Naive thymus-derived CD4-positive, alpha-beta T cell (primary cell): ENCODE measurements at regions of chr7 and their contacts with region 1.

Region 1: DNA sequence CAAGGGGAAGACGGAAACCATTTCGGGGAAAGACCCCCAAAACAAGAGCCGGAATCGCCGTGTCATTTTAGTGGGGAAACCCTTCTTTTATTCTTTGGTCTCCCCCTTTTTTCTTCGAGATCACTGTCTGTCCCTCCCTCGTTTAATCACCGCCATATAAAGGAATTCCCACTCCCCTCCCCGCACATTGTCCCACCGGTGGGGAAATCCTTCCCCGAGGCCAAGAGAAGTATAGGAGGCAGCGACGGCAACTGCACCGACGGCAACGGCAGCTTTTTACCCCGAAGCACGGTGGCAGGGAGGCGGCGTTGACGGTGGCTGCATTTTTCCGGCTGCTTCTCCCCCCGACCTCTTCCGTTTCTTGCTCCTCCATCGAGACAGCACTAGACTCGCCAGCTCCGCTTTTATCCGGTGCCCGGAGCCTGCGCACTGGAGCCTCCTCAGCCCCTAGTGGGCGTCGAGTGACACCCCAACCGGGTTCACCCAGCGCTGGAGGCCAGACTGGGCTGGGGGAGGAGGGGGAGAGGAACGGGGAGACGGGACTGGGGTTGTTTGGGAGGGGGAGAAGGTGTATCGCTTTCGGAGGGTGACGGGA is 687 bp upstream of the KMT2E start:
- DNase-seq: peak; percentile 93 to 98 (median 96)
- ATAC-seq: peak; percentile 68
- H3K4me3 ChIP-seq: peak overlapping the region; percentile 99
- H3K4me3 Mint-ChIP-seq: peak overlapping the region; percentile 96 to 100 (median 98)
- H3K27ac ChIP-seq: peak overlapping the region; percentile 97
- H3K27ac Mint-ChIP-seq: peak overlapping the region; percentile 99 to 100 (median 100)
- H3K4me1 ChIP-seq: peaks cover 14 to 24% of the 10 kb centered on the region in 2 donors
- H3K4me1 Mint-ChIP-seq: peaks cover 31 to 50% (median 41%) of the 10 kb centered on the region in 7 donors
- H3K27me3 ChIP-seq: no peaks in the 10 kb centered on the region
- H3K27me3 Mint-ChIP-seq: peaks cover 0 to 8% (median 0%) of the 10 kb centered on the region in 5 donors

Region 2: GRCh38 chr7:104943502-104944343 is 69.6 kb before region 1 on chr7:
- CTCF ChIA-PET with region 1: no interaction called
- POLR2A ChIA-PET with region 1: interaction called, 99 read pairs
- intact Hi-C with region 1: loop called (anchors 1 kb)
- DNase-seq: peak; percentile 31 to 85 (median 68)
- ATAC-seq: peak; percentile 23
- H3K4me3 ChIP-seq: peak overlapping the region; percentile 40
- H3K4me3 Mint-ChIP-seq: peak overlapping the region; percentile 77 to 95 (median 88)
- H3K27ac ChIP-seq: peak overlapping the region; percentile 87
- H3K27ac Mint-ChIP-seq: peak overlapping the region; percentile 95 to 100 (median 100)
- H3K4me1 ChIP-seq: peaks cover 46 to 50% of the 10 kb centered on the region in 2 donors
- H3K4me1 Mint-ChIP-seq: peaks cover 45 to 79% (median 70%) of the 10 kb centered on the region in 7 donors
- H3K27me3 ChIP-seq: no peaks in the 10 kb centered on the region
- H3K27me3 Mint-ChIP-seq: peaks cover 0 to 2% (median 0%) of the 10 kb centered on the region in 5 donors

Region 3: DNA sequence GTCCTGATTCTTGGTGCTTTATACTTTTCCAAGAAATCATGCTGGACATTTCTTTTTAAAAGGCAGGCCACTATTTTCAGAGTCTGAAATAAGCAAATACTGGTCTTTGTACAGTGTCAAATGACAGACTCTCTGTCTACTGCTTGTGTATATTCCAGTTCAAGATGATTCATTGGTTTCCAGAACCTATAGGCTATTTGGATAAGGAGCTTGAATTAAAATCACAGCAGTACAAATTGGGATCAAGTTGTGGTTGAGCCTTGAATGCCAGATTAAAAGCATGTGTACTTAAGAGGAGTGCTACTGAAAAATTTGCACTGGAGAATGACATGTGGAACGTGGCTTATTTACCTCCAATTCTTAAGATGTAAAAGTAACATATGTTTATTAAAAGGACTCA is 11.4 kb after region 1 on chr7:
- CTCF ChIA-PET with region 1: interaction called, 4 read pairs
- POLR2A ChIA-PET with region 1: interaction called, 82 read pairs
- intact Hi-C with region 1: loop called (anchors 1 kb)
- DNase-seq: no peak
- ATAC-seq: no peak
- H3K4me3 ChIP-seq: no peak overlapping the region
- H3K4me3 Mint-ChIP-seq: peak overlapping the region in 8 of 10 donors; percentile 29 to 96 (median 58)
- H3K27ac ChIP-seq: no peak overlapping the region
- H3K27ac Mint-ChIP-seq: peak overlapping the region in 2 of 9 donors; percentile 28 to 50
- H3K4me1 ChIP-seq: peaks cover 67 to 74% of the 10 kb centered on the region in 2 donors
- H3K4me1 Mint-ChIP-seq: peaks cover 63 to 99% (median 92%) of the 10 kb centered on the region in 7 donors
- H3K27me3 ChIP-seq: no peaks in the 10 kb centered on the region
- H3K27me3 Mint-ChIP-seq: no peaks in the 10 kb centered on the region

Region 4: DNA sequence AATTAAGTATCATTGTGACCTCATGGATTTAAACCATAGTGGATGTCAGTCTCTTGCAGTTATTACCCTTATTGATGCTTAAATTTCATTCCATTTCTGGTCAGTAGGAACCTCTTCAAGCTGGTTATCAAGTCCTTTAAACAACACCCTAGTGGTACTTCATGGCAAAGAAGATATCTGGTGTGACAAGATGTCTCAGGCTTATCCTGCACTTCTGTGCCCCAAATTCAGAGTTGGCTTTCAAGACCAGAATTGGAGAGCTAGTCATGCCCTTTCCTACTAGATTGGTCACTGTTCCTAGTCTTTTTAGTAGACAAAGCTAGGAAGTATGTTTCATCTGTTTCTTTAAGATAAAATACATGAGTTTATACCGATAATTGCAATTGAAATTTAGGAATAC is 55.6 kb after region 1 on chr7:
- CTCF ChIA-PET with region 1: interaction called, 3 read pairs
- POLR2A ChIA-PET with region 1: interaction called, 5 read pairs
- intact Hi-C with region 1: loop called in 1 of 2 experiments (anchors 2 kb)
- DNase-seq: no peak
- ATAC-seq: no peak
- H3K4me3 ChIP-seq: no peak overlapping the region
- H3K4me3 Mint-ChIP-seq: no peak overlapping the region
- H3K27ac ChIP-seq: no peak overlapping the region
- H3K27ac Mint-ChIP-seq: peak overlapping the region in 2 of 9 donors; percentile 41 to 55
- H3K4me1 ChIP-seq: peaks cover 0 to 4% of the 10 kb centered on the region in 2 donors
- H3K4me1 Mint-ChIP-seq: peaks cover 6 to 33% (median 14%) of the 10 kb centered on the region in 7 donors
- H3K27me3 ChIP-seq: no peaks in the 10 kb centered on the region
- H3K27me3 Mint-ChIP-seq: no peaks in the 10 kb centered on the region

Region 5: GRCh38 chr7:105531792-105532671 is 518.7 kb after region 1 on chr7 and contains the start of gene RINT1:
- CTCF ChIA-PET with region 1: no interaction called
- POLR2A ChIA-PET with region 1: interaction called, 7 read pairs
- intact Hi-C with region 1: loop called (anchors 1 to 5 kb)
- DNase-seq: peak; percentile 72 to 90 (median 81)
- ATAC-seq: peak; percentile 97
- H3K4me3 ChIP-seq: peak within 1 kb of the TSS; percentile 86
- H3K4me3 Mint-ChIP-seq: peak within 1 kb of the TSS; percentile 87 to 99 (median 93)
- H3K27ac ChIP-seq: peak within 1 kb of the TSS; percentile 83
- H3K27ac Mint-ChIP-seq: peak within 1 kb of the TSS; percentile 87 to 98 (median 92)
- H3K4me1 ChIP-seq: peaks cover 13 to 18% of the 10 kb centered on the region in 2 donors
- H3K4me1 Mint-ChIP-seq: peaks cover 21 to 59% (median 38%) of the 10 kb centered on the region in 7 donors
- H3K27me3 ChIP-seq: no peaks in the 10 kb centered on the region
- H3K27me3 Mint-ChIP-seq: no peaks in the 10 kb centered on the region
- total RNA-seq, gene RINT1: 23.0 to 31.8 (median 26.0) TPM